GM12878 (cell line): ENCODE measurements at regions of chr11 and their contacts with region 1.

Region 1: GRCh38 chr11:6402561-6402981 is 12.3 kb downstream of the SMPD1 start:
- DNase-seq: peak; percentile 76
- ATAC-seq: peak; percentile 94
- H3K4me3 ChIP-seq: peak overlapping the region; percentile 54; the same call in 1 of the 2 replicates
- H3K27ac ChIP-seq: peak overlapping the region; percentile 16
- H3K4me1 ChIP-seq: peaks cover 25% of the 10 kb centered on the region
- H3K27me3 ChIP-seq: no peaks in the 10 kb centered on the region
- CTCF ChIP-seq: no peak
- EP300 ChIP-seq: peak; percentile 47 to 65; a peak in 2 of 4 replicates
- POLR2A ChIP-seq: peak; percentile 58
- RAD21 ChIP-seq: no peak

Region 2: GRCh38 chr11:6285019-6285418 is 117.6 kb before region 1 on chr11:
- CTCF ChIA-PET with region 1: no interaction called
- POLR2A ChIA-PET with region 1: no interaction called
- RAD21 ChIA-PET with region 1: no interaction called
- SMC1A ChIA-PET with region 1: no interaction called
- in situ Hi-C with region 1: no loop called
- intact Hi-C with region 1: no loop called
- DNase-seq: no peak
- ATAC-seq: no peak
- H3K4me3 ChIP-seq: no peak overlapping the region
- H3K27ac ChIP-seq: no peak overlapping the region
- H3K4me1 ChIP-seq: no peaks in the 10 kb centered on the region
- H3K27me3 ChIP-seq: peaks cover 2 to 4% of the 10 kb centered on the region in 2 experiments; a peak in 3 of 4 replicates
- CTCF ChIP-seq: no peak
- EP300 ChIP-seq: no peak
- POLR2A ChIP-seq: no peak
- RAD21 ChIP-seq: no peak

Region 3: DNA sequence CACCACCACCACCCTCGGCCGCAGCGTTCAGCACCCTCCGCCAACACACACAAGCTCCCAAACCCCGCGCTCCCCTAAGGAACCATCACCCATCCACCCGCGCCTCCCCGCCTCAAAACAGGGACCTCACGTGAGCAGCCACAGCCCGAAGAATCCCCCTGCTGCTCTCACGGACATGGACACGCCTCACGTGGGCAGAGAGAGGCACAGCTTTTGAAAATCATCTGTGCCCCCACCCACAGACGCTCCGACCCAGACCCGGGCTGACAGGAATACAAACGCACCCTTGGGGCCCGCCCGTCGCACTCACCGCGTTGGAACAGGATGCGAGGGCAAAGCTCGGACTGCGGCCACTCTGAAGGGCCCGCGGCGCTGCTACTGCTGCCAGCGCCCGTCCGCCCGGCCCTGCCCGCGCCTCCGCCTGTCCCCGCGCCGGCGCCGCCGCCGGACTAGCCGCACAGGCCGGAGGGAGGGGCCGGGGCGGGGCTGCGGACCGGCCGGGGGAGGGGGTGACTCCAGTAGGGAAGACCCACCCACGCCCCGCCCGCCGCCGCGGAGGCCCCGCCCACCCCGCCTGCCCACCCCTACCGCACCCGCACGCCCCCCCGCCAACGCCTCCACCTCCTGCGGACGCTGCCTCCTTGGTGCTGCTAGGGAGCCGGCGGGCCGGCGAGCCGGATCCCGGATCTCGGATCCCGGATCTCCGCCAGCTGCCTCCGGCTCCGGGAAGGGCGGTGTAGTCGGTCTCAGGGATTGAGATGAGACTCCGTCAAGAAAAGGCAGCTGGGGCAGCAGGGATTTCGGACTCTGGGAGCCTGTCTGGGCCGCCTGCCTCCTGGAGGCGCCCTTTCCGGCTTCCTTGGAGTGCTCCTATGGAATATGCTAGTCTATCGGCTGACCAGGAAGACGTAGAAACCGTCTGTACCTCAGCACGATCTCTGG is 71.2 kb after region 1 on chr11 and contains the start of gene TRIM3:
- CTCF ChIA-PET with region 1: no interaction called
- POLR2A ChIA-PET with region 1: no interaction called
- RAD21 ChIA-PET with region 1: no interaction called
- SMC1A ChIA-PET with region 1: interaction called, 4 read pairs
- in situ Hi-C with region 1: no loop called
- intact Hi-C with region 1: loop called (anchors 5 kb)
- DNase-seq: no peak
- ATAC-seq: peak; percentile 85
- H3K4me3 ChIP-seq: peak within 1 kb of the TSS; percentile 75
- H3K27ac ChIP-seq: no peak within 1 kb of the TSS
- H3K4me1 ChIP-seq: peaks cover 15% of the 10 kb centered on the region
- H3K27me3 ChIP-seq: no peaks in the 10 kb centered on the region
- CTCF ChIP-seq: no peak
- EP300 ChIP-seq: no peak
- POLR2A ChIP-seq: peak; percentile 72
- RAD21 ChIP-seq: no peak
- polyA plus RNA-seq, gene TRIM3: 0.34 to 0.55 TPM